Aorta (tissue), 5 donors: ENCODE measurements at regions of chr11 and their contacts with region 1.

Region 1: GRCh38 chr11:64472593-64473455 is 113.9 kb downstream of the RPS6KA4 start:
- DNase-seq: no peak
- ATAC-seq: no peak
- H3K4me3 ChIP-seq: no peak overlapping the region
- H3K27ac ChIP-seq: no peak overlapping the region
- H3K4me1 ChIP-seq: no peaks in the 10 kb centered on the region
- H3K27me3 ChIP-seq: no peaks in the 10 kb centered on the region

Region 2: GRCh38 chr11:64372802-64373597 is 99.8 kb before region 1 on chr11:
- intact Hi-C with region 1: no loop called
- DNase-seq: peak in 1 of 2 donors; percentile 70
- ATAC-seq: peak; percentile 53
- H3K4me3 ChIP-seq: no peak overlapping the region
- H3K27ac ChIP-seq: no peak overlapping the region
- H3K4me1 ChIP-seq: no peaks in the 10 kb centered on the region
- H3K27me3 ChIP-seq: no peaks in the 10 kb centered on the region

Region 3: DNA sequence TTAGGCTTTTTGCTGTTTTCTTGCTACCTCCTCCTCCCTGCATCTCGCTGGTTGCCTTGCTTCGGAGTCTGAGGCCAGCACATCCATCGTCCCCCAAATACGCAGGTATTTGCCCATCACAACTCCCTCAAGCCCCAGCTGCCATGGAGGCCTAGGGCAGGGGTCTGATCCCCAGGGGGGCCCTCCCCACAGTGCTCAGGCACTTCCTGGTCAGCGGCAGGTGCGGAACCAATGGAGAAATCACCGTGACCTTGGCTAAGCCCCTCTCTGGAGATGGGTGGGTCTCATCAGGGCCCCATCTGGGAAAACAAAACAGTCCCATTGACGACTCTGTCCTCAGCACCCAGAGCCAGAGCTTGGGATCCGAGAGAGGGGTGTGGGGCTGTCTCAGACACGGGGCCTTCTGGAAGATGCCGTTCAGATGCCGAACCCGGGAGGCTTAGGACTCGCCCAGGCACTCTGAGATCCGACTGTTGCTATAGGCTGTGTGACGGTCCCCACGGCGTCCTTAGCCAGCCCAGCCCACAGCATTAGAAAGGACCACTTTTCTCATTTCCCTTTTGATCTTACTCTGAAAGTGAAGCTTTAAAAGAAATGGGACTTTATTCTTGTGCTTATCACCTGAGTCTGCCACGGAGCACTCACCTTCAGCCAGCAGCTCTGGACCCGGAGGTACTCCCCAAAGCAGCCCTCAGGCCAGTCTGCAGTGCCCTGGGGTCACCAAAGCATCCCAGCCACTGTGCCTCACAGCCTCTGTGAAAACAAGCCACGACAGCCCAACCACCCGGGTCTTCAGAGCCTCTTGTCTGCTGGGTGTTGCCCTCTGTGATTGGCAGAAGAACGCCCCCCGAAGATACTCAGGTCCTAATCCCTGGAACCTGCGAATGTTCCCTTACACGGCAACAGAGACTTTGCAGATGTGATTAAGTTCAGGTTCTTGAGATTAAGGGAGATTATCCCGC is 57.0 kb after region 1 on chr11:
- intact Hi-C with region 1: loop called in 1 of 2 experiments (anchors 5 kb)
- DNase-seq: no peak
- ATAC-seq: no peak
- H3K4me3 ChIP-seq: no peak overlapping the region
- H3K27ac ChIP-seq: no peak overlapping the region
- H3K4me1 ChIP-seq: no peaks in the 10 kb centered on the region
- H3K27me3 ChIP-seq: no peaks in the 10 kb centered on the region